ENCODE measurements at regions of chr17 and their contacts with region 1.

Region 1: GRCh38 chr17:48908047-48908843 is at the start of gene UBE2Z:
- DNase-seq: peak in 1 of 2 donors; percentile 96
- H3K4me3 ChIP-seq: peak within 1 kb of the TSS; percentile 87 to 96
- H3K27ac ChIP-seq: peak within 1 kb of the TSS; percentile 93
- H3K4me1 ChIP-seq: peaks cover 37% of the 10 kb centered on the region
- H3K27me3 ChIP-seq: no peaks in the 10 kb centered on the region
- CTCF ChIP-seq: no peak
- POLR2A ChIP-seq: peak; percentile 6 to 59
- total RNA-seq, gene UBE2Z: 67.3 TPM

Region 2: DNA sequence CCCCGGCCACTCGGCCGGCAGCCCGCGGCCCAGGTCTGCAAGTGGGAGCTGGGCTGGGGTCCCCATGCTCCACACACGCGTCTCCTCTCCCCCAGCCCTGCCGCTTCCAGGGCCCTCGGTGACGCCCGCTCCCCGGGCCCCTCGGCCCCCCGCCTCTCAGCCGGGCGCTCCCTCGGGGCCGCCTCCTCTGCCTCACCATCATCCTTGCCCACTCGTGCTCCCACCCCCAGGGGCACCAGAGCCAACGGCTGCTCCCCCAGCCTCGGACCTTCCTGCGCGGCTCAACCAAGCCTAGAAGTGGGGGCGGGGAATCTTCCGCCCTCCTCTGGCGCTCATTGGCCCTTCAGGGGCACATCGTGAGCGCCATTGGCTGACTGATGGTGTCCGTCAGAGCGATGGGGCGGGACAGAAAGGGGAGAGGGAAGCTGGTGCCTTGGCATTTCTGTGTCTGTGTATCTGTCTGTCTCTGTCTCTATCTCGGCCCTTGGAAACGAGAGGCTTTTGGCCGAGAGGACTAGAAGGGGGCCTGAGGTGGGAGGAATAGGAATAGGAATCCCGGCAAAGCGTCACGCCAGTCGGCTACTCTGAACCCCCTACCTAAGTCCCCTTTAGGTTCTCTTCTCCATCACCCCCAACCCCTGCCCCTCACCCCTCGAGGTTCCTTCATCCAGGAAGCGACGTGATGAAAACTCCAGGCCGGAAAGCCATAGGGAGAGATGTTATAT is 1808.1 kb before region 1 on chr17:
- intact Hi-C with region 1: loop called (anchors 10 kb)
- DNase-seq: peak in 1 of 2 donors; percentile 92
- H3K4me3 ChIP-seq: peak overlapping the region; percentile 88 to 92
- H3K27ac ChIP-seq: peak overlapping the region; percentile 86
- H3K4me1 ChIP-seq: peaks cover 24% of the 10 kb centered on the region
- H3K27me3 ChIP-seq: no peaks in the 10 kb centered on the region
- CTCF ChIP-seq: no peak
- POLR2A ChIP-seq: peak in 1 of 2 donors; percentile 29

Region 3: DNA sequence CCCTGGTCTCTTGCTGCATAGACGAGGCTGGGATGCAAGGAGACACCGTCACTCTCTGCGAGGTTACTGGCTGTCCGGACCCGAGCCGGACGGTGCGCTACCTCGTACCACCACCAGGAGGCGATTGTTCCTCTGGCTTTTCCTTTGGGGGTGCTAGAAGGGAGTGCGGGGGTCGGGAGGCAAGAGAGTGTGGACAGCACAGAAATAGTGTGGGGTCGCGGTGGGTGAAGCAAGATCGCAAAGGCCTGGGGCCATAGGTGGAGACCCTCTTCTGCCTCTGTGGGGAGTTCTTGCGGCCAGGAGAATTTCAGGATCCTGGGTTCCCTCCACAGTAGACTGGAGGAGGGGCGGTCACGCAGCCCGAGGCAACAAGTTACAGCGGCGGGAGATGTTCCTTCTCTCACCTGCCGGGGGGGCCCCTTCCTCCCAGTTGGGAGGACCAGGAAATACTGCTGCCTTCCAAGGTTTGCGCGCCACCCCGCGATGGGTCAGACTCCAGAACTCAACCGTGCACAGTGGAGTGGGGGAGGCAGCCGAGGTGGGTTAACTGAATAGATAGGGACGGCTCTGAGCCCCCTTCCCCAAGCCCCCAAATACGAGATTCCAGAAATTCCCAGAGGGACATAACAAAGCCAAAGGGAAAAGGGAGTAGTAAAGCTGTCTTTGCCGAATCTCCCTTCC is 315.4 kb after region 1 on chr17:
- intact Hi-C with region 1: no loop called
- DNase-seq: no peak
- H3K4me3 ChIP-seq: peak overlapping the region in 1 of 2 donors; percentile 8
- H3K27ac ChIP-seq: no peak overlapping the region
- H3K4me1 ChIP-seq: peaks cover 26% of the 10 kb centered on the region
- H3K27me3 ChIP-seq: peaks cover 13% of the 10 kb centered on the region
- CTCF ChIP-seq: peak; percentile 46 to 68 (median 55)
- POLR2A ChIP-seq: no peak